H1 (cell line): ENCODE measurements at regions of chr1 and their contacts with region 1.

Region 1: DNA sequence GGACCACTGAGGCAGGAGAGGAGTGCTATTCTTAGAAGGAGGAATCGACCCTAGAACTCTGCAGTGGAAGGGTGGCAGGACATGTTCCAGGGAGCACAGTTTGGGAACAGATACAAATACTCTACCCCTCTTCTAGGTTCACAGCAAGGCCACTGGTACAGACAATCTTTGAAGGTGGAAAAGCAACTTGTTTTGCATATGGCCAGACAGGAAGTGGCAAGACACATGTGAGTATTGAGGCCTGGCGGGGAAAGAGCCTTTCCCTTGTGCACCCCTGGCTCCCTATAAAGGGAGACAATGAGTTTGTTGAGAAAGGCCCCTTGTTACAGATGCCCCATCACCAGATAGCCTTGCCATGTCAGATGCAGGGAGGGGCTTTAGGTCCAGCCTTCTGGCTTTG is 17.8 kb downstream of the KIF2C start:
- DNase-seq: no peak
- H3K4me3 ChIP-seq: no peak overlapping the region
- H3K27ac ChIP-seq: no peak overlapping the region
- H3K4me1 ChIP-seq: no peaks in the 10 kb centered on the region
- H3K27me3 ChIP-seq: no peaks in the 10 kb centered on the region
- CTCF ChIP-seq: no peak
- EP300 ChIP-seq: no peak
- POLR2A ChIP-seq: no peak
- RAD21 ChIP-seq: no peak

Region 2: GRCh38 chr1:44739361-44740178 is 17.9 kb before region 1 on chr1 and contains the start of gene KIF2C:
- CTCF ChIA-PET with region 1: interaction called, 5 read pairs
- POLR2A ChIA-PET with region 1: interaction called, 79 read pairs
- DNase-seq: peak; percentile 91 to 97
- H3K4me3 ChIP-seq: peak within 1 kb of the TSS; percentile 54 to 98 (median 94)
- H3K27ac ChIP-seq: peak within 1 kb of the TSS; percentile 83
- H3K4me1 ChIP-seq: peaks cover 0 to 3% (median 2%) of the 10 kb centered on the region in 4 experiments; a peak in 3 of 7 replicates
- H3K27me3 ChIP-seq: no peaks in the 10 kb centered on the region
- CTCF ChIP-seq: no peak
- EP300 ChIP-seq: no peak
- POLR2A ChIP-seq: peak; percentile 40 to 93
- RAD21 ChIP-seq: no peak
- total RNA-seq, gene KIF2C: 66.4 and 68.1 TPM in 2 replicates